Activated CD4-positive, alpha-beta T cell treated with anti-CD3 and anti-CD28 coated beads for 36 hours (primary cell): ENCODE measurements at regions of chr12 and their contacts with region 1.

Region 1: GRCh38 chr12:53952871-53953734 is 1.6 kb upstream of the HOXC12 start:
- DNase-seq: no peak
- ATAC-seq: no peak
- H3K4me3 Mint-ChIP-seq: no peak overlapping the region
- H3K27ac Mint-ChIP-seq: no peak overlapping the region
- H3K4me1 Mint-ChIP-seq: peaks cover 12% of the 10 kb centered on the region
- H3K27me3 Mint-ChIP-seq: peaks cover 85% of the 10 kb centered on the region

Region 2: GRCh38 chr12:53938326-53939140 is 14.6 kb before region 1 on chr12 and contains the start of gene HOXC13:
- CTCF ChIA-PET with region 1: interaction called, 14 read pairs
- POLR2A ChIA-PET with region 1: no interaction called
- intact Hi-C with region 1: loop called (anchors 2 kb)
- DNase-seq: peak; percentile 80
- ATAC-seq: peak; percentile 85
- H3K4me3 Mint-ChIP-seq: no peak within 1 kb of the TSS
- H3K27ac Mint-ChIP-seq: no peak within 1 kb of the TSS
- H3K4me1 Mint-ChIP-seq: peaks cover 10% of the 10 kb centered on the region
- H3K27me3 Mint-ChIP-seq: peaks cover 79% of the 10 kb centered on the region
- total RNA-seq, gene HOXC13: not detected

Region 3: GRCh38 chr12:53974084-53975063 is 21.3 kb after region 1 on chr12 and contains the start of gene HOTAIR:
- CTCF ChIA-PET with region 1: no interaction called
- POLR2A ChIA-PET with region 1: no interaction called
- intact Hi-C with region 1: loop called in 1 of 2 experiments (anchors 1 kb)
- DNase-seq: peak; percentile 48
- ATAC-seq: peak; percentile 53
- H3K4me3 Mint-ChIP-seq: peak within 1 kb of the TSS; percentile 48
- H3K27ac Mint-ChIP-seq: no peak within 1 kb of the TSS
- H3K4me1 Mint-ChIP-seq: peaks cover 24% of the 10 kb centered on the region
- H3K27me3 Mint-ChIP-seq: peaks cover 83% of the 10 kb centered on the region
- total RNA-seq, gene HOTAIR: not detected

Region 4: GRCh38 chr12:53995378-53996239 is 42.5 kb after region 1 on chr12:
- CTCF ChIA-PET with region 1: interaction called, 3 read pairs
- POLR2A ChIA-PET with region 1: no interaction called
- intact Hi-C with region 1: loop called in 1 of 2 experiments (anchors 5 kb)
- DNase-seq: peak; percentile 47
- ATAC-seq: peak; percentile 42
- H3K4me3 Mint-ChIP-seq: peak overlapping the region; percentile 65
- H3K27ac Mint-ChIP-seq: no peak overlapping the region
- H3K4me1 Mint-ChIP-seq: peaks cover 27% of the 10 kb centered on the region
- H3K27me3 Mint-ChIP-seq: peaks cover 83% of the 10 kb centered on the region

Region 5: GRCh38 chr12:54053751-54054741 is 100.9 kb after region 1 on chr12 and contains the start of gene HOXC4:
- CTCF ChIA-PET with region 1: no interaction called
- POLR2A ChIA-PET with region 1: no interaction called
- intact Hi-C with region 1: loop called (anchors 2 to 5 kb)
- DNase-seq: no peak
- ATAC-seq: no peak
- H3K4me3 Mint-ChIP-seq: peak within 1 kb of the TSS; percentile 0
- H3K27ac Mint-ChIP-seq: no peak within 1 kb of the TSS
- H3K4me1 Mint-ChIP-seq: peaks cover 21% of the 10 kb centered on the region
- H3K27me3 Mint-ChIP-seq: peaks cover 81% of the 10 kb centered on the region
- total RNA-seq, gene HOXC4: not detected

Region 6: DNA sequence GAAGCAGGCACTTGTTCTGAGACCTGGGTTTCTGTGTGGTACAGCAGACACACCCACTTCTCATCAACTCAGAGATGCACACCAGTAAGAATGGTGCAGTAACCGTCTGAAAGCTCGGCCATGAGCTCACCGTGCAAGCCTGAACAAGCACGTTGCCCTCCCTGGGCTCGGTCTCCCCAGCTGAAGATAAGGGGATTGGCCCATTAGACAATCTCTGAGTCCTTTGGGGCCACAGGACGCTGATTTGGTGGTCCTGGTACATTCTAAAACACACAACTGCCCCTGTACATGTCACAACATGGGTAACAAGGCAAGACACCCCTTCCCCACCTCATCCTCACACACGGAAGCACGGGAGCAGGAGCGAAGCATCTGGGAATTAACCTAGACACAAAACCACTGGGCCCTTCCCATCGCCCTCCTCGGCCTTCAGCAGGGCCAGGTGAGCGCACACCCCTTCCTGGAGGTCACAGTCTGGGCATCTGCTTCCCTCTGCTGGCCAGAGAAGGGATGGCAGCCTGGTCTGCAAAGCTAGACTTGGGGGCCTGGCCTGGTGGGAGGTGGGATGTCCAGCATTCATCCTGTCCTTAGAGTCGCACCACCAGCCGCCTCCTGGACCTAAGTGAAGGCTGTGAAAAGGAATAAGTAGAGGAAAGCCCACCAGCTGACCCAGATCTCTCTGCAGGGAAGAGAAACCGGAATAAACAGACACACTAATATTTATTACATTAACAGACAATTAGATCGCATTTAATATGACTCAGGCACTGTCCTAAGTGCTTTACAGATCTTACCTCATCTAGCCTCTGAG is 254.6 kb after region 1 on chr12:
- CTCF ChIA-PET with region 1: no interaction called
- POLR2A ChIA-PET with region 1: no interaction called
- intact Hi-C with region 1: no loop called
- DNase-seq: peak; percentile 88
- ATAC-seq: peak; percentile 93
- H3K4me3 Mint-ChIP-seq: no peak overlapping the region
- H3K27ac Mint-ChIP-seq: no peak overlapping the region
- H3K4me1 Mint-ChIP-seq: no peaks in the 10 kb centered on the region
- H3K27me3 Mint-ChIP-seq: peaks cover 25% of the 10 kb centered on the region